ENCODE measurements at regions of chr4 and their contacts with region 1.

Region 1: GRCh38 chr4:70915036-70915815 is 13.1 kb downstream of the MOB1B start:
- DNase-seq: no peak
- ATAC-seq: no peak
- H3K4me3 ChIP-seq: no peak overlapping the region
- H3K4me3 Mint-ChIP-seq: no peak overlapping the region
- H3K27ac ChIP-seq: no peak overlapping the region
- H3K27ac Mint-ChIP-seq: no peak overlapping the region
- H3K4me1 ChIP-seq: no peaks in the 10 kb centered on the region
- H3K4me1 Mint-ChIP-seq: peaks cover 19 to 41% (median 22%) of the 10 kb centered on the region in 3 donors
- H3K27me3 ChIP-seq: no peaks in the 10 kb centered on the region
- H3K27me3 Mint-ChIP-seq: no peaks in the 10 kb centered on the region

Region 2: DNA sequence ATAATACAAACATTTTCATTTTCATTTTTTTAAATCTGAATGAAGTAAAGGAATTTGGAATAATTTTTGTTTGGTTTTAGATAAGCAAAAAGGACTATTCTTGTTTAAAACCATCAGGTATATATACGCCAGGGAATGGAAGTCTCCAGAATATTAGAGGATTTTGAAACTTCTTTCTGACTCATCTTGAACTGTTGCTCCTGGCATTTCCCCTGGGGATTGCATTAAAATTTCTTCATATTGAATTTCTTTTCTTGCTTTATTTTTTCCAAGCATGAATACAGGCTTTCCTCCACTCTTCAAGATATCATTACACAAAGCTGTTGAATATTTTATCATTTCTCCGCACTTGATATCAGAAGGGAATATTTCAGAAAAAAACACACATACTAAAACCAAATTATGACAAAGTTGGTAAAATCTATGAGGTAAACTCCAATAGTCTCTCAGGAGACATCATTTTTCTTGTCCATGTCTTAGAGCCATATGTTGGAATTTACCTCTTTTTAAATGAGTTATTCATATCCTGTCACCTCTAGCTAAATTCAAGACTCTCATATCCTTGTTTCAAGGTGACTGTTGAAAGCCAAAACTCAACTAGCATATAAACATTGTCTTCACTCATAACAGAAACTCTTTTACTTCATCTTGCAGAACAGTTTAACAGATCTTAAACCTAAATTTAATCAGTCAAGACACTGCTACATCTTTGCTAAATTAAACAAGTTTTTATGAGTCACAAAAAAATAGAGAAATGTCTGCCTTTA is 1005.0 kb before region 1 on chr4:
- CTCF ChIA-PET with region 1: interaction called in 1 of 2 experiments, 10 read pairs
- POLR2A ChIA-PET with region 1: no interaction called
- DNase-seq: no peak
- ATAC-seq: no peak
- H3K4me3 ChIP-seq: no peak overlapping the region
- H3K4me3 Mint-ChIP-seq: no peak overlapping the region
- H3K27ac ChIP-seq: no peak overlapping the region
- H3K27ac Mint-ChIP-seq: no peak overlapping the region
- H3K4me1 ChIP-seq: no peaks in the 10 kb centered on the region
- H3K4me1 Mint-ChIP-seq: no peaks in the 10 kb centered on the region
- H3K27me3 ChIP-seq: peaks cover 0 to 2% of the 10 kb centered on the region in 2 experiments
- H3K27me3 Mint-ChIP-seq: peaks cover 0 to 7% of the 10 kb centered on the region in 2 donors

Region 3: GRCh38 chr4:70855464-70855863 is 59.8 kb before region 1 on chr4:
- CTCF ChIA-PET with region 1: no interaction called
- POLR2A ChIA-PET with region 1: no interaction called
- DNase-seq: no peak
- ATAC-seq: no peak
- H3K4me3 ChIP-seq: no peak overlapping the region
- H3K4me3 Mint-ChIP-seq: no peak overlapping the region
- H3K27ac ChIP-seq: no peak overlapping the region
- H3K27ac Mint-ChIP-seq: no peak overlapping the region
- H3K4me1 ChIP-seq: no peaks in the 10 kb centered on the region
- H3K4me1 Mint-ChIP-seq: no peaks in the 10 kb centered on the region
- H3K27me3 ChIP-seq: no peaks in the 10 kb centered on the region
- H3K27me3 Mint-ChIP-seq: no peaks in the 10 kb centered on the region

Measured in T-cell (primary cell).